Astrocyte of the cerebellum (primary cell): ENCODE measurements at regions of chr3 and their contacts with region 1.

Region 1: GRCh38 chr3:64792445-64792844 is 104.6 kb upstream of the ADAMTS9 start:
- DNase-seq: no peak
- H3K4me3 ChIP-seq: no peak overlapping the region
- CTCF ChIP-seq: no peak

Region 2: GRCh38 chr3:64848822-64849221 is 56.4 kb after region 1 on chr3:
- in situ Hi-C with region 1: loop called (anchors 5 kb)
- DNase-seq: no peak
- H3K4me3 ChIP-seq: no peak overlapping the region
- CTCF ChIP-seq: no peak